ENCODE measurements at regions of chr5 and their contacts with region 1.

Region 1: GRCh38 chr5:33049845-33050244 is 338.7 kb downstream of the NPR3 start:
- DNase-seq: peak; percentile 58 to 86
- H3K4me3 ChIP-seq: no peak overlapping the region
- H3K27ac ChIP-seq: peak overlapping the region; percentile 41
- H3K4me1 ChIP-seq: peaks cover 32% of the 10 kb centered on the region
- H3K27me3 ChIP-seq: no peaks in the 10 kb centered on the region
- CTCF ChIP-seq: no peak

Region 2: DNA sequence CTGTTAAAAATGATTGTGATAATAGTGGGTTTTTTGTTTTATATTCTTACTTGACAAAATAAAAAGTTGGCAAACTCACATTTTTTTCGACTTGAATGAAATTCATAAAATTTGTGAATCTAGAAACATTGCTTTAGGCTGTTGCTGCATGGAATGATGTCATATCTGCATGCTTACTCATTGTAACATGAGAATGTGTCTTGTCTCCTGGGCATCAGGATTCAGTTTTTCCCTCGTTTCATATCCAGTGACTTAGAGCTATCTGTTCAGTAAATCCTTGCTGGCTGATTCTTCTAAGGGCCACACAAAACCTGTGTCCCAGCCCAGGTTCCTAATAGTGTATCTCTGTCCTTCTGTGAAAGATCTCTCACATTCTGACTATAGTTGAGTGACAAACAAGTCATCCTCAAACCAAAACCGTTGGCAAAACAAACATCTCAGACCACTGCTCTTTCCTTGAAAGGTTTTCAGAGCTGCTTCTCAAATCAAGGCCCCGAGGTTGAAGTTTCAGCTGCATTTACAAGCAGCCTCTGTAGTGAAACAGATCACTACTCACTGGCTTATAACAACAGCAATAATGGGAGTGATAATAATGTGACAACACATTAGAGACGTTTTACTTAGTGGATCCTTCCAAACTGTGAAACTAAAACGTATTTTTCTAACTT is 243.7 kb before region 1 on chr5:
- CTCF ChIA-PET with region 1: no interaction called
- POLR2A ChIA-PET with region 1: no interaction called
- intact Hi-C with region 1: no loop called
- DNase-seq: no peak
- H3K4me3 ChIP-seq: no peak overlapping the region
- H3K27ac ChIP-seq: no peak overlapping the region
- H3K4me1 ChIP-seq: peaks cover 11% of the 10 kb centered on the region
- H3K27me3 ChIP-seq: peaks cover 7% of the 10 kb centered on the region; the same call in 1 of the 2 replicates
- CTCF ChIP-seq: no peak

Region 3: GRCh38 chr5:33008751-33009418 is 41.0 kb before region 1 on chr5:
- CTCF ChIA-PET with region 1: no interaction called
- POLR2A ChIA-PET with region 1: no interaction called
- intact Hi-C with region 1: loop called (anchors 1 kb)
- DNase-seq: peak; percentile 73 to 92
- H3K4me3 ChIP-seq: no peak overlapping the region
- H3K27ac ChIP-seq: peak overlapping the region; percentile 48
- H3K4me1 ChIP-seq: peaks cover 14% of the 10 kb centered on the region
- H3K27me3 ChIP-seq: no peaks in the 10 kb centered on the region
- CTCF ChIP-seq: no peak

Region 4: GRCh38 chr5:33074548-33074947 is 24.7 kb after region 1 on chr5:
- CTCF ChIA-PET with region 1: no interaction called
- POLR2A ChIA-PET with region 1: no interaction called
- intact Hi-C with region 1: loop called (anchors 2 kb)
- DNase-seq: peak in 1 of 2 experiments; percentile 19
- H3K4me3 ChIP-seq: no peak overlapping the region
- H3K27ac ChIP-seq: no peak overlapping the region
- H3K4me1 ChIP-seq: 0 out of 2 replicates have a peak, but pooled peaks cover 5% of the 10 kb centered on the region
- H3K27me3 ChIP-seq: no peaks in the 10 kb centered on the region
- CTCF ChIP-seq: no peak